ENCODE measurements at regions of chr2 and their contacts with region 1.

Region 1: DNA sequence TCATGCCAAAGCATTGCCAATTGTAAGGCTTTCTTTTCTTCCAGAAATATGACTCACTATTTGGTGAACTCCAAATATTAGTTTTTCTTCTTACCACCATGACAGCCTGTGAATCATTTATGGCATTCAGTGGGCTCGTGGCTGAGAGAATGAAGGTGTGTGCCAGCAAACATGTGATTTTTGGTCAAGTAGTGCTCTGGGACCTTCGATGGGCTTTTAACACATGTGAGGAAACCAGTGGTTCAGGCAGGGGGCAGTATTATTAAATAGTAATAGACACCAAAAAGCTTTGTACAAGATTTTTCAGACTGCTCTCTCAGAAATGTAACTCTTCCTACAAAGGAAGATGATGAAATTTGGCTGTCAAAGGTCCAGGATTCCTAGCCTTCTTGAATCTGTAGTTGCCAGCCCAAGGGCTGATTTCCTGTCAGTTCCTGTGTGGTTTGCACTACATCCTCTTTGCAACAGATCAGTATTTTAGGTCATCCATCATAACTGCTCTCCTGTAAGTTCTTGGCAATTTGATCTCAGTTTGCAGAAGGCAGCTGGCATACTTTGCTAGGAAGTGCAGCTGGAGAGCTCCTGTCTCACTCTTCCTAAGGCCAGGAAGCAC is 64.3 kb downstream of the BABAM2 start:
- DNase-seq: peak; percentile 68
- H3K4me3 Mint-ChIP-seq: no peak overlapping the region
- H3K27ac Mint-ChIP-seq: peak overlapping the region; percentile 68
- H3K4me1 Mint-ChIP-seq: peaks cover 65% of the 10 kb centered on the region
- H3K27me3 Mint-ChIP-seq: no peaks in the 10 kb centered on the region

Region 2: DNA sequence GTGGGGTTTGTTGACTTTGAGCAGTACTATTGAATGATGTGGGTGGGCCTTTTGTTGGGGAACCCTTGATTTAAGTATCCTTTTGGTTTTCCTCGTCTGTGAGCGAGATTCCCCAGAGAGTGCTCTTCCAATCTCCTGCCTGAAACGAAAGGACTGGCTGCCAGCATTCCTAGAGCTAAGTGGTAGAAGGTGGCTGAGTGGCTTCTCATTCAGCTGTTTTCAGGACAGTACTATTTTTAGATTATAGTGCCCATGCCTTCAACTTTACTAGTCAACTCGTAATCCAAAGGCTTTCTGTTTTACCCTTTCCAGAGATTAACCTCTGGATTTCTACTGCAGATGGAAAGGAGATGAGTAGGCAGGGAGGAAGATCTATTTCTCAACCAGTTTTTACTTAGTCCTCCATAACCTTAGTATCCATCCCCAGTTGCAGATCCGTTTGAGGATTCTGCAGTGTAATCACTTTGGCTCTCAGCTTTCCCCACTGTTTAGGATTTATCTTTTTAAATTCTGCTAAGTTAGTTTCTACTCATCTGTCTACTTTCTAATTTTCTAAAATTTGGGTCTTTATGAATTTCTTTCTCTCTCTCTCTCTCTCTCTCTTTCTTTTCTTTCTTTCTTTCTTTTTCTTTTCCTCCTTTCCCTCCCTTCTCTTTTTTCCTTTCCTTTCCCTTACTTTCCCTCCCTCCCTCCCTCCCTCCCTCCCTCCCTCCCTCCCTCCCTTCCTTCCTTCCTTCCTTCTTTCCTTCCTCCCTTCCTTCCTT is 282.0 kb before region 1 on chr2:
- CTCF ChIA-PET with region 1: no interaction called
- intact Hi-C with region 1: no loop called
- DNase-seq: no peak
- H3K4me3 Mint-ChIP-seq: no peak overlapping the region
- H3K27ac Mint-ChIP-seq: no peak overlapping the region
- H3K4me1 Mint-ChIP-seq: peaks cover 8% of the 10 kb centered on the region
- H3K27me3 Mint-ChIP-seq: no peaks in the 10 kb centered on the region

Region 3: DNA sequence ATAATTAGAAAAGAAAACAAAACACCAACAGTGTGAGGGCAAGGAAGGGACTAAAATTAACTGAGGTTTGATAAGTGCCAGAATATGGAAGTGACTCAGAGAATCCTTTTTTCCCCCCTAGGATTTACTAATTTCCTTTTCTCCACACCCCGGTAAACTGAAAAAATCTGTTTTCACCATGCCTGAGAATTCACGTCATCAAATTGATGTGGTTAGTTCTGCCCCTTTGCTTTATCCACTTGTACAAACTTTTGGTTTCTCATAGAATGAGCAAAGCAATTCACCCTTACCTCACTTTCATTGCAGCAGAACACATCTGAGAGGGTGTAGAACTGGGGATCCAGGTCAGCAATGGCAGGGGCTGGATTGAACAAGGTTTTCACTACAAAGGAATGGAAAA is 122.5 kb before region 1 on chr2:
- CTCF ChIA-PET with region 1: no interaction called
- intact Hi-C with region 1: no loop called
- DNase-seq: no peak
- H3K4me3 Mint-ChIP-seq: no peak overlapping the region
- H3K27ac Mint-ChIP-seq: no peak overlapping the region
- H3K4me1 Mint-ChIP-seq: no peaks in the 10 kb centered on the region
- H3K27me3 Mint-ChIP-seq: no peaks in the 10 kb centered on the region

Region 4: DNA sequence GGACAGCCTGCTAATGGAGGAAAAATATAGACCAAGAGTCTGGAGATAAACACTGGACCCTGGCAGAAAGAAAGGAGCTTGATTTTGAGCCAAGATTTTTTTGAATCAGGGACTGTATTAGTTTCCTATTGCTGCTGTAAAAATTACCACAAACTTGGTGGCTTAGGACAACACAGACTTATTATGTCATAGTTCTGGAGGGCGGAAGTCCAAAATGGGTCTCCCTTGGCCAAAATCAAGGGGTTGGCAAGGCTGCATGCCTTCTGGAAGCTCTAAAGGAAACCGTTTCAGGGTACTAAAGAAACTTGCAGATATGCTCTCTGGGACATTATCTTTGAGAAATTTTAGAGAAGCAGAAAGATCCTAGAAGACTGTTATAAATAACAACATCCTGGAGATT is 75.7 kb after region 1 on chr2:
- CTCF ChIA-PET with region 1: no interaction called
- intact Hi-C with region 1: loop called (anchors 5 kb)
- DNase-seq: no peak
- H3K4me3 Mint-ChIP-seq: no peak overlapping the region
- H3K27ac Mint-ChIP-seq: no peak overlapping the region
- H3K4me1 Mint-ChIP-seq: peaks cover 17% of the 10 kb centered on the region
- H3K27me3 Mint-ChIP-seq: no peaks in the 10 kb centered on the region

Region 5: DNA sequence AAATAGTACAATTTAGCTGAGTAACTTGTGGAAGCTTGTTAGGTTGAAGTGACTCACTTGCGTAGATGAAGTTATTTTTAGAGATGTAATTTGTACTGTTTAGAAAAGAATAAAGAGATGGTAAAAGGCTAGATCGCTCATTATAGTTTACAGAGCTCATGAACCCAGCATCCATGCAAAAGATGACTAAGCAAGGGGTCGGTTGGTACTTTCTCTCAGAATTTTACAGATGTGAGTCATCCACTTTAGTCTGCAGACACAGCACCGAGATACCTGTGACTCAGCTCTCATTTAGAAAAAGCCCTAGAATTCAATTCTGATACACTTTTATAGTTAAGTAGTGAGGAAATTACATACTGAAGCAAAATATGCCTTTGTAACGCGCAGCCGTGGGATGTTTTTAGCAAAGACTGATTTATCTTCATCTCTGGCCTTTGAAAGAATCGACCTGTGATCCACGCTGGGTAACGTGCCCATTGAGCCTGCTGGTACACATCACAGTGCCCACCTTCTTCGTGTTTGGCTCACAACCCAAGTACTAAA is 321.3 kb after region 1 on chr2:
- CTCF ChIA-PET with region 1: no interaction called
- intact Hi-C with region 1: loop called (anchors 5 kb)
- DNase-seq: peak; percentile 56
- H3K4me3 Mint-ChIP-seq: no peak overlapping the region
- H3K27ac Mint-ChIP-seq: peak overlapping the region; percentile 38
- H3K4me1 Mint-ChIP-seq: peaks cover 35% of the 10 kb centered on the region
- H3K27me3 Mint-ChIP-seq: no peaks in the 10 kb centered on the region